ENCODE measurements at regions of chr7 and their contacts with region 1.

Region 1: DNA sequence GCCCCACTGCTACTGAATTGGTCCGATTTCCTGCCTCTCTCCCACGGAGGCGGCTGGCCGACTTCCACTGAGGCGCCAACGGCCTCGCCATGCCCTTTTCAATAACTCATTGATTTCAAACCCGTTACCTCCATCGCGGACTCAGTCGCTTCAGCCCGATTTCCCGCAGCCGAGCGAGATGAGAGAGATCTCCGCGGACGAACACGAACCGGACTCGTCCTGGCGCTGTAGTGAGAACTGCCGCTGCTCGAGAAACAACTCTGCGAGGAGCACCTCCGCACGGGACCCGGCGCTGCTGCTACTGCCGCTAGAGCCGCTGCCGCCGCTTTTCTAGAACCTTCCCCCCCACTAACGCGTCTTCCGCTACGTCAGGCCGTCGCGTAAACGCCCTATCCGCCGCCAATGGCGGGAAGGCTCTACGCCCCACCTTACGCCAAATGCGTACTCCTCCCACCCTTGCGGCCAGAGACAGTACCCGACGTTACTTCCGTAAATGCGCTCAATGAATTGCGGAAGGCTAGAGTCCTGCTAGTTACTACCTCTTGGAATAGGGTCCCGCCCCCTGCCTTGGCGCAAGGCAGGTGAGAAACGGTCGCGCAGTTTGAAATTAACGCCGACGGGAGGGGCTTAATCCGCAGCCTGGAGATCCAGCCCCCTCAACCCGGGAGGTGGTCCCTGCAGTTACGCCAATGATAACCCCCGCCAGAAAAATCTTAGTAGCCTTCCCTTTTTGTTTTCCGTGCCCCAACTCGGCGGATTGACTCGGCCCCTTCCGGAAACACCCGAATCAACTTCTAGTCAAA is at the start of gene HNRNPA2B1:
- DNase-seq: peak; percentile 100
- ATAC-seq: peak; percentile 65
- H3K4me3 ChIP-seq: peak within 1 kb of the TSS; percentile 80 to 100 (median 100)
- H3K4me3 Mint-ChIP-seq: peak within 1 kb of the TSS; percentile 99
- H3K27ac ChIP-seq: peak within 1 kb of the TSS; percentile 97 to 99
- H3K27ac Mint-ChIP-seq: peak within 1 kb of the TSS; percentile 100
- H3K4me1 ChIP-seq: peaks cover 37 to 40% of the 10 kb centered on the region in 2 donors
- H3K4me1 Mint-ChIP-seq: peaks cover 53% of the 10 kb centered on the region
- H3K27me3 ChIP-seq: no peaks in the 10 kb centered on the region
- H3K27me3 Mint-ChIP-seq: no peaks in the 10 kb centered on the region
- CTCF ChIP-seq: no peak
- total RNA-seq, gene HNRNPA2B1: 524 and 536 TPM in 2 replicates

Region 2: DNA sequence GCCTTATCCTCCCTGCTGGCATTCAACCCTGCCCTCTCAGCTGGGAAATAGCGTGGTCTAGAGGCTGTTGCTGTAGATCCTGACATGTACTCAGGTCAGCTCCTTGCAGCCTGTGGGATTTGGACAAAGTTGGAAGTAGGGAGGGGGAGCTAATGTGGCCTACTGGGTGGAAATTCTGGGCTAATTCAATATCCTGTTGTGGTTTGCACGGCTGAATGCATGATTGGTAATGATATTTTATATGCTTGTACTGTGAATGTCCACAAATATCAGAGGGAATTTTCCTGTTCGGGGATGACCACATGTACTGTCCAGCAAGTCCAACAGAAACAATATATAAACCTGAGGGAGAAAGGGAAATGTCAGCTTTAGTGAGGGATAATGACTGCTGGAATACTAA is 950.3 kb before region 1 on chr7:
- CTCF ChIA-PET with region 1: no interaction called
- POLR2A ChIA-PET with region 1: no interaction called
- intact Hi-C with region 1: no loop called
- DNase-seq: no peak
- ATAC-seq: no peak
- H3K4me3 ChIP-seq: no peak overlapping the region
- H3K4me3 Mint-ChIP-seq: no peak overlapping the region
- H3K27ac ChIP-seq: no peak overlapping the region
- H3K27ac Mint-ChIP-seq: no peak overlapping the region
- H3K4me1 ChIP-seq: no peaks in the 10 kb centered on the region
- H3K4me1 Mint-ChIP-seq: no peaks in the 10 kb centered on the region
- H3K27me3 ChIP-seq: peaks cover 0 to 6% (median 2%) of the 10 kb centered on the region in 4 experiments
- H3K27me3 Mint-ChIP-seq: peaks cover 21% of the 10 kb centered on the region
- CTCF ChIP-seq: no peak

Region 3: GRCh38 chr7:25968205-25968993 is 232.2 kb before region 1 on chr7:
- CTCF ChIA-PET with region 1: interaction called, 3 read pairs
- POLR2A ChIA-PET with region 1: interaction called, 4 read pairs
- intact Hi-C with region 1: loop called (anchors 2 kb)
- DNase-seq: peak; percentile 80
- ATAC-seq: peak; percentile 84
- H3K4me3 ChIP-seq: peak overlapping the region in 3 of 5 experiments; percentile 8 to 37 (median 28)
- H3K4me3 Mint-ChIP-seq: peak overlapping the region; percentile 78
- H3K27ac ChIP-seq: peak overlapping the region; percentile 57 to 75
- H3K27ac Mint-ChIP-seq: peak overlapping the region; percentile 83
- H3K4me1 ChIP-seq: peaks cover 30 to 42% of the 10 kb centered on the region in 2 donors
- H3K4me1 Mint-ChIP-seq: peaks cover 39% of the 10 kb centered on the region
- H3K27me3 ChIP-seq: peaks cover 0 to 23% (median 8%) of the 10 kb centered on the region in 4 experiments
- H3K27me3 Mint-ChIP-seq: peaks cover 16% of the 10 kb centered on the region
- CTCF ChIP-seq: no peak

Region 4: DNA sequence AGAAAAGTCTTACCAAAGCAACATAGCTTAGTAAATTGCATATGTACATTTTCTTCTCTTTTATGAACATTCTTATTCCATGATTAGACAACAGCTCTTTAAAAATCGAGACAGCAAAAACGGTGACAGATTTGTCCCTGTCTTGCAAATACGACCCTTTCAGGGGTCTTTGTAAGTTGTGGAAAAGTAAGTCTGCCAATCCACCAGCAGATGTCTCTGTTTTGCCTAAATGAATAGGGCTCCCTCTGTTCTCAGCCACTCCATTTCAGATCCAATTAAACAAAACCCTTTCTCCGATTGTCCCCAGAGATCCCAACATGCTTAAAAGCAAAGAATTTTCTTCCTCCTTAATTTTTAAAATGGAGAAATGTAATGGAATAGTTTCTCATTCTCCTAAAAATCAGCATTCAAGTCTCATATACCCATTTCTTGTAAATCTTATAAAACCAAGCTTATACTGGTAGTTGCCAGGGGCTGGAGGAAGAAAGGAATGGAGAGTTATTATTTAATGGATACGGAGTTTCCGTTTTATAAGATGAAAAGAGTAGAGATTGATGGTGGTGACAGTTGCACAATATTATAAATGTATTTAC is 109.6 kb before region 1 on chr7:
- CTCF ChIA-PET with region 1: interaction called, 114 read pairs
- POLR2A ChIA-PET with region 1: interaction called, 11 read pairs
- intact Hi-C with region 1: loop called (anchors 1 kb)
- DNase-seq: peak; percentile 62
- ATAC-seq: peak; percentile 45
- H3K4me3 ChIP-seq: no peak overlapping the region
- H3K4me3 Mint-ChIP-seq: peak overlapping the region; percentile 32
- H3K27ac ChIP-seq: no peak overlapping the region
- H3K27ac Mint-ChIP-seq: peak overlapping the region; percentile 0
- H3K4me1 ChIP-seq: peaks cover 17 to 22% of the 10 kb centered on the region in 2 donors
- H3K4me1 Mint-ChIP-seq: peaks cover 26% of the 10 kb centered on the region
- H3K27me3 ChIP-seq: no peaks in the 10 kb centered on the region
- H3K27me3 Mint-ChIP-seq: no peaks in the 10 kb centered on the region
- CTCF ChIP-seq: peak; percentile 66

Region 5: DNA sequence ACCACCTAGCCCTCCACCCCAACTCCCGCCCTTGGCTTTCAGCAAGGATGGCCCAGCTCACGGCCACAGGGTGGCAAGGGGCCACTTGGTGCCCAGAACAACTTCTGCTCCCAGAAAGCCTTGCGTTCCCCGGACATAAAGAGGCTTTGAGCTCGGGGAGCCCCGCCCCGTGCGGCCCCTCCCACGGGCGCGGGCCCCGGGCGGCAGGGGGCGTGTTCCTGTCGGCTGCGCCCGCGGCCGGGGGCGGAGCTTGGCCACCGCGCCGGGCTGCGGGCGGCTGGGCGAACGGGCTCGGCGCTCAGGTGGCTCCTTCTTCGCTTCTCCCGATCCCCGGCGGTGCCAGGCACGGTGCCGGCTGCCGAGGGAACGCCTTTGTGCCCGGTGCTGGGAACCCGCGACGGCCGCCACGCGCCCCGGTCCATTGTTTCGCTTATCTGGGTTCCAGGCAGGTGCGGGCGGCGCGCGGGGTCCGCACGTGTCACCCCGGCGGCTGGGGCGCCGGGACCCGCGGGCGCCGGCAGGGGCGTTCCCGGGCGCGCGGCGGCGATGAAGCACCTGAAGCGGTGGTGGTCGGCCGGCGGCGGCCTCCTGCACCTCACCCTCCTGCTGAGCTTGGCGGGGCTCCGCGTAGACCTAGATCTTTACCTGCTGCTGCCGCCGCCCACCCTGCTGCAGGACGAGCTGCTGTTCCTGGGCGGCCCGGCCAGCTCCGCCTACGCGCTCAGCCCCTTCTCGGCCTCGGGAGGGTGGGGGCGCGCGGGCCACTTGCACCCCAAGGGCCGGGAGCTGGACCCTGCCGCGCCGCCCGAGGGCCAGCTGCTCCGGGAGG is 48.5 kb before region 1 on chr7 and contains the start of gene NFE2L3:
- CTCF ChIA-PET with region 1: interaction called, 41 read pairs
- POLR2A ChIA-PET with region 1: interaction called, 23 read pairs
- intact Hi-C with region 1: loop called (anchors 1 kb)
- DNase-seq: peak; percentile 89
- ATAC-seq: peak; percentile 89
- H3K4me3 ChIP-seq: peak within 1 kb of the TSS; percentile 35 to 90 (median 62)
- H3K4me3 Mint-ChIP-seq: peak within 1 kb of the TSS; percentile 97
- H3K27ac ChIP-seq: peak within 1 kb of the TSS; percentile 16 to 65
- H3K27ac Mint-ChIP-seq: peak within 1 kb of the TSS; percentile 88
- H3K4me1 ChIP-seq: peaks cover 34 to 42% of the 10 kb centered on the region in 2 donors
- H3K4me1 Mint-ChIP-seq: peaks cover 48% of the 10 kb centered on the region
- H3K27me3 ChIP-seq: no peaks in the 10 kb centered on the region
- H3K27me3 Mint-ChIP-seq: no peaks in the 10 kb centered on the region
- CTCF ChIP-seq: no peak
- total RNA-seq, gene NFE2L3: 1.6 and 4.5 TPM in 2 replicates

Region 6: GRCh38 chr7:26187380-26188205 is 13.1 kb before region 1 on chr7:
- CTCF ChIA-PET with region 1: interaction called, 33 read pairs
- POLR2A ChIA-PET with region 1: interaction called, 15 read pairs
- intact Hi-C with region 1: loop called (anchors 1 kb)
- DNase-seq: peak; percentile 45
- ATAC-seq: no peak
- H3K4me3 ChIP-seq: no peak overlapping the region
- H3K4me3 Mint-ChIP-seq: no peak overlapping the region
- H3K27ac ChIP-seq: peak overlapping the region in 1 of 2 donors; percentile 20
- H3K27ac Mint-ChIP-seq: peak overlapping the region; percentile 61
- H3K4me1 ChIP-seq: peaks cover 14 to 15% of the 10 kb centered on the region in 2 donors
- H3K4me1 Mint-ChIP-seq: peaks cover 83% of the 10 kb centered on the region
- H3K27me3 ChIP-seq: no peaks in the 10 kb centered on the region
- H3K27me3 Mint-ChIP-seq: no peaks in the 10 kb centered on the region
- CTCF ChIP-seq: no peak

Region 7: DNA sequence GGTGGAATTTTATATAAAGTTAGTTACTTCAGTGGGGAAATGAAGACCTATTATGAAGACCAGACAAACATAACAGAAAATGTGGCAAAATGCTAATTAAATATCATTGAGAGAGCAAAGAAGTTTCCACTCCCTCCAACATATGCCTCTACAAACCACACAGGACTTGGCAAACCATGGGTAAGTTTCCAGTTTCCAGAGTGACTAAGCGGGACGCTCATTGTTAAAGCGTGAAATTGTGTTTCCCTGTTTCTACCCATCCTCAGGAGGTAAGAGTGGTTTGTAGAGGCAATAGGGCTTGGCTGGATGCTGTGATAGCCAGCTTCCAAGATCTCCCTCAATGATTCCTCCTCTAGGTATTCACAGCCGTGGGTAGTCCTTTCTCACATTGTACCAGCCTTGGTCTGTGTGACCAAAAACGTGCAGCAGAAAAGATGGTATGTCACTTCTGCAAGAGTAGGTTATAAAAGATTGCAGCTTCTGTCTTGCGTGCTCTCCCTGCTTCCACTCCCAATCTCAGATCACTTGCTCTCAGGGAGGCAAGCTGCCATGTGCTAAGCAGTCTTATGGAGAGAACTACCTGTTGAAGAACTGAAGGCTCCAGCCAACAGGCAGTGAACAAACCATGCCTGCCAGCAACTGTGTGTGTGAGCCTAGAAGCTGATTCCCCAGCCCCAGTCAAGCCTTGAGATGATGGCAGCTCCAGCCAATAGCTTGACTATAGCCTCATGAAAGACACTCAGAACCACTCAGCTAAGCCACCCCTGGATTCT is 36.6 kb after region 1 on chr7:
- CTCF ChIA-PET with region 1: no interaction called
- POLR2A ChIA-PET with region 1: no interaction called
- intact Hi-C with region 1: no loop called
- DNase-seq: no peak
- ATAC-seq: no peak
- H3K4me3 ChIP-seq: no peak overlapping the region
- H3K4me3 Mint-ChIP-seq: no peak overlapping the region
- H3K27ac ChIP-seq: no peak overlapping the region
- H3K27ac Mint-ChIP-seq: no peak overlapping the region
- H3K4me1 ChIP-seq: no peaks in the 10 kb centered on the region
- H3K4me1 Mint-ChIP-seq: no peaks in the 10 kb centered on the region
- H3K27me3 ChIP-seq: peaks cover 0 to 8% (median 0%) of the 10 kb centered on the region in 4 experiments
- H3K27me3 Mint-ChIP-seq: peaks cover 5% of the 10 kb centered on the region
- CTCF ChIP-seq: no peak

Region 8: DNA sequence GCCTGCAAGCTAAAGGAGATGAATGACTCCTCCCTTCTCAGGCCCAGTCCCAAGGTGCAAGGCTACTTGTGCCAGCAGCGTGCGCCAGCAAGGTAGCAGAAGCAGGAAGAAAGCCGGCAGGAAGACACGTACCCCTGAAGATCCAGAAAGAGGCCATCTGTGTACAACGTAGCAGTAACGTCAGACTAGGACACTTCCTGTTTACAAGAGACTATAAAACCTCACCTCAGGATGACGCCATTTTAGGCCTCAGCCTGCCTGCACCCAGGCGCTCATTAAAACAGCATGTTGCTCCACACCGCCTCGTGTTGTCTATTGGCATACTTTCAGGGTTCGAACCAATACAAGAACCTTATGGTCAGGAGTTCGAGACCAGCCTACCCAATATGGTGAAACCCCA is 49.6 kb after region 1 on chr7:
- CTCF ChIA-PET with region 1: no interaction called
- POLR2A ChIA-PET with region 1: no interaction called
- intact Hi-C with region 1: no loop called
- DNase-seq: no peak
- ATAC-seq: no peak
- H3K4me3 ChIP-seq: no peak overlapping the region
- H3K4me3 Mint-ChIP-seq: no peak overlapping the region
- H3K27ac ChIP-seq: no peak overlapping the region
- H3K27ac Mint-ChIP-seq: no peak overlapping the region
- H3K4me1 ChIP-seq: no peaks in the 10 kb centered on the region
- H3K4me1 Mint-ChIP-seq: no peaks in the 10 kb centered on the region
- H3K27me3 ChIP-seq: no peaks in the 10 kb centered on the region
- H3K27me3 Mint-ChIP-seq: no peaks in the 10 kb centered on the region
- CTCF ChIP-seq: no peak

Region 9: DNA sequence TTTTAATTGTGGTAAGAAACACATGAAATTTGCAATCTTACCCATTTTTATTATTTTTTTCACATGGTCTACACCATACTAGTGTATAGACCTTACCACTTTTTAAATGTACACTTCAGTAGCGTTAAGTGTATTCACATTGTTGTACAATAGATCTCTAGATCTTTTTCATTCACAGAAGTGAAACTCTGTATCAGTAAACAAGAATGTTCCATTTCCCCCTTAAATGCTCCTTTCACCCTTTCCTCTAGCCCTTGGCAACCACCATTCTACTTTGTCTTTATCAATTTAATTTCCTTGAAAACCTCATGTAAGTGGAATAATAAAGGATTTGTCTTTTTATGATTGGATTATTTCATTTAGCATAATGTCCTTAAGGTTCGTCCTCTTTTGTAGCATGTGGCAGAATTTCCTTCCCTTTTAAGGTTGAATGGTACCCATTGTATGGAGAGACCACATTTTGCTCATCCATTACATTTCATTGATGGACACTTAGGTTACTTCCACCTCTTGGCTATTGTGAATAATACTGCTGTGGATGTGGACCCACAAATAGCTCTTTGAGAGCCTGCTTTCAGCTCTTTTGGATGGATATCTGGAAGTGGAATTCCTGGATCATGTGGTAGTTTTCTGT is 136.7 kb after region 1 on chr7:
- CTCF ChIA-PET with region 1: interaction called, 3 read pairs
- POLR2A ChIA-PET with region 1: interaction called, 7 read pairs
- intact Hi-C with region 1: loop called (anchors 2 kb)
- DNase-seq: peak; percentile 55
- ATAC-seq: peak; percentile 62
- H3K4me3 ChIP-seq: peak overlapping the region in 1 of 5 experiments; percentile 57
- H3K4me3 Mint-ChIP-seq: peak overlapping the region; percentile 78
- H3K27ac ChIP-seq: peak overlapping the region; percentile 36 to 68
- H3K27ac Mint-ChIP-seq: peak overlapping the region; percentile 91
- H3K4me1 ChIP-seq: peaks cover 70 to 80% of the 10 kb centered on the region in 2 donors
- H3K4me1 Mint-ChIP-seq: peaks cover 66% of the 10 kb centered on the region
- H3K27me3 ChIP-seq: no peaks in the 10 kb centered on the region
- H3K27me3 Mint-ChIP-seq: no peaks in the 10 kb centered on the region
- CTCF ChIP-seq: no peak

Region 10: DNA sequence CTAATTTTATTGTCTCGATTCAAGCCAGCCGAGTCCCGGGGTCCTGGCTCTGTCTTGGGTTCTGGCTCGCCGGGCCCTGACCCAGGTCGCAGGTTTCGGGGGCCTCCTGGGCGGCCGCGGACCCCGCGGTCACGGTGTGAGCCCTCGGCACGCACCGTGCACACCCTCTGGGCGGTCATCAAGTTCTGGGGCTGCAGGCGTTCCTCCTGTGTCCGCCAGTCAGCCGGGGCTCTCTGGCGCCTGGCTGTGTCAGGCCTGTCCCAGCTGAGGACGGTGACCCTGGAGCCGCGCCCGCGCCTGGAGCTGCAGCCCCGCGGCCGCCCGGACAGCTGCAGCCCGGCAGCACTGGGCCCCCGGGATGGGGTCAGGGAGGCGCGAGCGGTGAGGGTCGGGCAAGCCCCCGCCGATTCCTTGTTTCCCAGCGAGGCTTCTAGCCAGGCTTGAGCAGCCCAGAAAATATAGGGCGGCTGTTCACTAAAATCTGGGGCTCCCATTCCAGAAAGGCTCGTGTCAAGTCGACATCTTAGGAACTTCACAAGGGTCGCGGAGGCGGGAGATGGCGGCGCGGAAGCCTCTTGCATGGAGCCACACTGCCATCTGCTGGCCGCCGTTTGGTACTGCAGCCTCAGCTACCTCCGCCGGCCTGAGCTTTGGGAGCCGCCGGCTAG is 960.0 kb after region 1 on chr7:
- CTCF ChIA-PET with region 1: no interaction called
- POLR2A ChIA-PET with region 1: no interaction called
- intact Hi-C with region 1: loop called (anchors 10 kb)
- DNase-seq: peak; percentile 91
- ATAC-seq: peak; percentile 84
- H3K4me3 ChIP-seq: peak overlapping the region; percentile 24 to 76 (median 62)
- H3K4me3 Mint-ChIP-seq: peak overlapping the region; percentile 86
- H3K27ac ChIP-seq: no peak overlapping the region
- H3K27ac Mint-ChIP-seq: peak overlapping the region; percentile 67
- H3K4me1 ChIP-seq: peaks cover 49 to 57% of the 10 kb centered on the region in 2 donors
- H3K4me1 Mint-ChIP-seq: peaks cover 38% of the 10 kb centered on the region
- H3K27me3 ChIP-seq: peaks cover 1 to 88% (median 75%) of the 10 kb centered on the region in 4 experiments
- H3K27me3 Mint-ChIP-seq: peaks cover 70% of the 10 kb centered on the region
- CTCF ChIP-seq: peak; percentile 100